Activated CD4-positive, alpha-beta memory T cell treated with anti-CD3 and anti-CD28 coated beads for 36 hours (primary cell): ENCODE measurements at regions of chr1 and their contacts with region 1.

Region 1: DNA sequence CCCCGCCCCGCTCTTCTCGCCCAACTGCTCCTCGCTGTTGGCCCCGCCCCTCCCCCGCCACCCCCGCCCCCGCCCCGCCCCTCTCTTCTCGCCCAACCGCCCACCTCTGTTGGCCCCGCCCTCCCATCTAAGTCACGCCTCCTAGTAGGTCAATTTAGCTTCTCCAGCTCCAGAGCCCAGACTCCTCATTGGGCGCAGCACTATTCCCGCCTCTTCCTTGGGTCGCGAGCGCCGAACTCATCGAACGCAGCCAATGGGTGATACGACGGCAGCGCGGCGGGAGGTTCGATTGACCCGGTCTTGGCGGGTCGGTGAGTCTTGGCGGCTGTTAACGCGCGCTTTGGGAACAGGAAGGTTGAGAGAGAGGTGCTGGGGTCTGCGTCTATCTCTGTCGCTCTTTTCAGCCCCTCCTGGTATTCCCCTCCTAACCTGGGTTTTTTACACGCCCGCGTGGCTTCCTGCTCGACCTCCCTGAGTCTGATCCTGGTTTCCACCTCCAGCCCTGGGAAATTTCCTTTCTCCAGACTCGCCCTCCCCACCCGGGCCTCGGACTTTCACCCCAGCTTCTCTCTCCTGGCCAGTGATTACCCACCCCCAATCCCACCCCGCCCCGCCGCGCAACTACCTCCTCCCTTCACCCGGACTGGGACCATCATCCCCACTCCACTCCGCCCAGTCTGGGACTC is at the start of gene RAD54L:
- DNase-seq: peak; percentile 99
- H3K4me3 Mint-ChIP-seq: peak within 1 kb of the TSS; percentile 99
- H3K27ac Mint-ChIP-seq: peak within 1 kb of the TSS; percentile 91
- H3K4me1 Mint-ChIP-seq: peaks cover 26% of the 10 kb centered on the region
- H3K27me3 Mint-ChIP-seq: no peaks in the 10 kb centered on the region
- total RNA-seq, gene RAD54L: 64.9 to 65.0 TPM

Region 2: DNA sequence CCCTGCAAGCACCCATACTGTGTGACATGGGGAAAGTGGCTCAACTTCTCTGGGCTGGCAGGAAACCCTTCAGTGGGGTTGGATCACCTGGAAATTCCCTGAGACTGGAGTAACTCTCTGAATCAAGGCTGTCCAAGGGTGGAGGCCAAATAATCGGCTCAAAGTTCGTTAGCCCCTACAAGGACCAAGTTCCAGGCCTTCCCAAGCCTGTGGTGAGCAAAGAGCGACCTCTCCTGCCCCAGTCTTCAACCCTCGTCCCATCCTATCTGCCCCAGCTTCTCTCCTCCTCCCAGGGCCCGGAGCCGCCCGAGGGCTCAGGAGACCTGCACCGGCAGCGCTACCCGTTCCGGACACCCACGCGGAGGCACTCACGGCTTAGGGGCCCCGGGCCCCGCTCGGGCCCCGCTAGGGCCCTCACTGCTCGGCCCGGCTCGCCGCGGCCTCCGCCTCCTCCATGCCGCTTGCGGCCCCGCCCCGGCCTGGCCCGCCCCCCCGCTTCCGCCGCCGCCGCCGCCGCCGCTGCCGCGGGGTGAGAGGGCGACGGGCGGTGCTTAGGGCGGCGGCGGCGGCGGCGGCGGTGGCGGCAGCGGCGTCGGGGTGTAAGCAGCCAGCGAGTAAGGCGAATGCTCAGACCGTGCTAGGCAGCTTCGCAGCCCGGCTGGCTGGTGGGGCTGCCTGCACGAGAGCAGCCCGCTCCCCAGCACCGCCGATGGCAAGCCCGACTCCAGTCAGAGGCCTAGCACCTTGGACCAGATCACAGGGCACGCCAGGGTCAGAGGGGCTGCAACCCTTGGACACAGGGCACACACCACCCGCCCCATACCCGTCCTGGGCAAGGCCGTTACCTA is 49.4 kb before region 1 on chr1 and contains the start of gene POMGNT1:
- CTCF ChIA-PET with region 1: interaction called, 3 read pairs
- POLR2A ChIA-PET with region 1: no interaction called
- intact Hi-C with region 1: loop called (anchors 2 kb)
- DNase-seq: peak; percentile 85
- H3K4me3 Mint-ChIP-seq: peak within 1 kb of the TSS; percentile 82
- H3K27ac Mint-ChIP-seq: peak within 1 kb of the TSS; percentile 58
- H3K4me1 Mint-ChIP-seq: peaks cover 26% of the 10 kb centered on the region
- H3K27me3 Mint-ChIP-seq: peaks cover 2% of the 10 kb centered on the region
- total RNA-seq, gene POMGNT1: 43.6 to 44.1 TPM

Region 3: GRCh38 chr1:46303038-46303871 is 55.7 kb after region 1 on chr1 and contains the starts of genes LRRC41 and UQCRH:
- CTCF ChIA-PET with region 1: interaction called, 12 read pairs
- POLR2A ChIA-PET with region 1: interaction called, 16 read pairs
- intact Hi-C with region 1: loop called (anchors 1 kb)
- DNase-seq: peak; percentile 94
- H3K4me3 Mint-ChIP-seq: peak within 1 kb of the TSS; percentile 98
- H3K27ac Mint-ChIP-seq: peak within 1 kb of the TSS; percentile 94
- H3K4me1 Mint-ChIP-seq: peaks cover 44% of the 10 kb centered on the region
- H3K27me3 Mint-ChIP-seq: no peaks in the 10 kb centered on the region
- total RNA-seq, gene LRRC41: 31.4 to 34.6 TPM
- total RNA-seq, gene UQCRH: 351 to 353 TPM

Region 4: GRCh38 chr1:46340404-46341221 is 93.0 kb after region 1 on chr1 and contains the start of gene NSUN4:
- CTCF ChIA-PET with region 1: interaction called, 16 read pairs
- POLR2A ChIA-PET with region 1: interaction called, 8 read pairs
- intact Hi-C with region 1: loop called (anchors 1 kb)
- DNase-seq: peak; percentile 93
- H3K4me3 Mint-ChIP-seq: peak within 1 kb of the TSS; percentile 94
- H3K27ac Mint-ChIP-seq: peak within 1 kb of the TSS; percentile 98
- H3K4me1 Mint-ChIP-seq: peaks cover 44% of the 10 kb centered on the region
- H3K27me3 Mint-ChIP-seq: no peaks in the 10 kb centered on the region
- total RNA-seq, gene NSUN4: 29.1 to 29.9 TPM